ENCODE measurements at regions of chr4 and their contacts with region 1.

Region 1: DNA sequence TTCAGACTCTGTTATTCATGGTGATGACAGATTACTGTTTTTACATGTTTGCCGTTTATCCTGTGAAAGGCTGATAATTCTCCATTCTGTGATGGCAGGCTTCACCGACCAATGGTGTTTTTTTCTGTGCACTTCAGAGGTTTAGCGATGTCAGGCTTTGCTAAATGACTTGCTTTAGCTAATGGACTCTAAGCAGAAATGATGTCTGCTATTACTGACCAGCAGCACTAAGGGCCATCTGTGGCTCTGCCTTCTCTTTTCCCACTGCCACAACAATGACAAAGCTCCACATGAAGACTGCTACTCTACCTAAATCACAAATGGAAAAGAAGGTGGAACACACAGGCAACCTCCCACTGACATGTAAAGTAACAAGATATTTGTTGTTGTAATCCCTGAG is 68.4 kb upstream of the ALB start:
- DNase-seq: no peak
- H3K4me3 ChIP-seq: no peak overlapping the region
- H3K27ac ChIP-seq: no peak overlapping the region
- H3K4me1 ChIP-seq: no peaks in the 10 kb centered on the region
- H3K27me3 ChIP-seq: no peaks in the 10 kb centered on the region
- CTCF ChIP-seq: no peak
- POLR2A ChIP-seq: no peak

Region 2: GRCh38 chr4:72809208-72809607 is 526.5 kb before region 1 on chr4:
- intact Hi-C with region 1: no loop called
- DNase-seq: no peak
- H3K4me3 ChIP-seq: no peak overlapping the region
- H3K27ac ChIP-seq: no peak overlapping the region
- H3K4me1 ChIP-seq: no peaks in the 10 kb centered on the region
- H3K27me3 ChIP-seq: no peaks in the 10 kb centered on the region
- CTCF ChIP-seq: no peak
- POLR2A ChIP-seq: no peak

Region 3: DNA sequence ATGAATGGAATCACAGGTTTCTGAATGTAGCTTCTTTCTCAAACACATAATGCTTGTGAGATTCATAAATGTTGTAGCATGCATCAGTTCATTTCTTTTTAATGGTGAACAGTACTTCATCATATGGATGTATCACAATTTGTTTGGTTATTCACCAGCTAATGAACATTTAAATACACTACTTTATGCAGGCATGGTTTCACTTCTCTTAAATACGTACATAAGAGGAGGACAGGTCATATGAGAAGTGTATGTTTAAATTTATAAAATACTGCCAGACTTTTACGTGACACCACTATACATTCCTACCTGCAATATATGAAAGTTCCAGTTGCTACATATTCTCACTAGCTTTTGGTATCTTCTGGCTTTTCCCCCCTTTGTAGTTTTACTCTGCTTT is 142.5 kb before region 1 on chr4:
- intact Hi-C with region 1: no loop called
- DNase-seq: no peak
- H3K4me3 ChIP-seq: no peak overlapping the region
- H3K27ac ChIP-seq: no peak overlapping the region
- H3K4me1 ChIP-seq: no peaks in the 10 kb centered on the region
- H3K27me3 ChIP-seq: no peaks in the 10 kb centered on the region
- CTCF ChIP-seq: no peak
- POLR2A ChIP-seq: no peak

Region 4: DNA sequence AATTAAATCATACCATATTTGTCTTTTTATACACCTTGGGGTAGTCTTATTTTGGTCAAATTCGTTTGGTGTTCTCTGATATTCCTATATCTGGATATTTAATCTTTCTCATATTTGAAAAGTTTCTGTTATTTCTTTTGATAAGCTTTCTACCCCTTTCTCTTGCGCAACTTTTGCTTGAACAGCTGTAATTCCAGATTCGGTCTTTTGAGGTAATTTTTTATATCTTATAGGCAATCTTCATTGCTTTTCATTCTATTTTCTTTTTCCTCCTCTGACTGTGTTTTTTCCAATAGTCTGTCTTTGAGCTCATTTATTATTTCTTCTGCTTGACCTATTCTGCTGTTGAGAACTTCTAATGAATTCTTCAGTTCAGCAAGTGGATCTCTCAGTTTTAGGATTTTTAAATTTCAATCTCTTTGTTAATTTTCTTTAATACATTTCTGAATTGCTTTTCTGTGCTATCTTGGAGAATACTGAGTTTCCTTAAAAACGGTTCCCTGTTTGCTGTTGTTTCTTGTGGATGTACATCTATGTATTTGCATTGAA is 811.0 kb after region 1 on chr4:
- intact Hi-C with region 1: loop called (anchors 10 kb)
- DNase-seq: no peak
- H3K4me3 ChIP-seq: no peak overlapping the region
- H3K27ac ChIP-seq: no peak overlapping the region
- H3K4me1 ChIP-seq: no peaks in the 10 kb centered on the region
- H3K27me3 ChIP-seq: no peaks in the 10 kb centered on the region
- CTCF ChIP-seq: no peak
- POLR2A ChIP-seq: no peak

Measured in prostate gland (tissue), 2 donors.